ENCODE measurements at regions of chr12 and their contacts with region 1.

Region 1: GRCh38 chr12:51549637-51550036 is 41.4 kb upstream of the SCN8A start:
- DNase-seq: no peak
- ATAC-seq: no peak
- H3K4me3 ChIP-seq: no peak overlapping the region
- H3K4me3 Mint-ChIP-seq: no peak overlapping the region
- H3K27ac ChIP-seq: no peak overlapping the region
- H3K27ac Mint-ChIP-seq: no peak overlapping the region
- H3K4me1 ChIP-seq: no peaks in the 10 kb centered on the region
- H3K4me1 Mint-ChIP-seq: no peaks in the 10 kb centered on the region
- H3K27me3 ChIP-seq: peaks cover 0 to 7% of the 10 kb centered on the region in 2 experiments
- H3K27me3 Mint-ChIP-seq: peaks cover 23 to 37% of the 10 kb centered on the region in 2 donors

Region 2: DNA sequence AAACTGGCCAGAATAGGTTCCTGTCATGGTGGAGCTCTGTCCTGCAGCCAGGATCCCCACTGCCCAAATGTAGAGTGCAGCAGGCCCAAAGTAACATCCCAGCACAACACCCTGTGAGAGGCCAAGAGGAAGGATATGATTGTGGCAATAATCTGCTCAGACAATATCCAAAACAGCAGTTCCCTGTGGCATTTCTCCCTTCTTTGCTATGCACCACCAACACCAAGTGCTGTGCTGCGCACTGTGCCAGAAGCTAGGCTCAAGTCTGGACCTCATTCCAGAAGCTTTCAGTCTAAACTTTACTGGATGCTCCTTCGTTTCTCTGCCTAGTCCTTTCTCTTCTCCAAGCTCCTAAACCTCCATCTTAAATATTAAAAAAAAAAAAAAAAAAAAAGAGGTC is 556.8 kb before region 1 on chr12:
- CTCF ChIA-PET with region 1: no interaction called
- POLR2A ChIA-PET with region 1: interaction called in 1 of 2 experiments, 11 read pairs
- DNase-seq: no peak
- ATAC-seq: no peak
- H3K4me3 ChIP-seq: no peak overlapping the region
- H3K4me3 Mint-ChIP-seq: no peak overlapping the region
- H3K27ac ChIP-seq: no peak overlapping the region
- H3K27ac Mint-ChIP-seq: no peak overlapping the region
- H3K4me1 ChIP-seq: no peaks in the 10 kb centered on the region
- H3K4me1 Mint-ChIP-seq: no peaks in the 10 kb centered on the region
- H3K27me3 ChIP-seq: no peaks in the 10 kb centered on the region
- H3K27me3 Mint-ChIP-seq: no peaks in the 10 kb centered on the region

Region 3: DNA sequence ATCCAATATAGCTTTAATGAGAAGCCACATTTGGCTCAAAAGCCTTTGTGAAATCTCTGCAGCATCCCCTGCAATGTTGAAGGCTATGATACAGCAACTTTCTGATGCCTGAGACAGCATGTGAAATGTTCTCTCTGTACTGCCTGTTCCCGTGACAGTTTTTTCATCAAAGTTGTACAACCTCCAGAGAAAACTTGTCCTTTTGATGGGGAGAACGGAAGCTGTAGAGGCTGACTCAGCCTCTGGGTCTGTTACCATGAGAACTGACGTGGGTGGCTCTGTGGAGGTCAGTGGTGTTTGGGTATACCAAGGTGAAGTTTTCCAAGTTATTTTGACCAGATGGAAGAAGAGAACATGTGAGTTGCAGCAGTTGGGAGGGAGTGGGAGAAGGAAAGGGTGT is 108.1 kb before region 1 on chr12:
- CTCF ChIA-PET with region 1: no interaction called
- POLR2A ChIA-PET with region 1: no interaction called
- DNase-seq: peak in 1 of 35 experiments; percentile 3
- ATAC-seq: peak in 1 of 4 experiments; percentile 38
- H3K4me3 ChIP-seq: no peak overlapping the region
- H3K4me3 Mint-ChIP-seq: no peak overlapping the region
- H3K27ac ChIP-seq: no peak overlapping the region
- H3K27ac Mint-ChIP-seq: no peak overlapping the region
- H3K4me1 ChIP-seq: no peaks in the 10 kb centered on the region
- H3K4me1 Mint-ChIP-seq: peaks cover 17 to 46% (median 25%) of the 10 kb centered on the region in 3 donors
- H3K27me3 ChIP-seq: no peaks in the 10 kb centered on the region
- H3K27me3 Mint-ChIP-seq: no peaks in the 10 kb centered on the region

Region 4: DNA sequence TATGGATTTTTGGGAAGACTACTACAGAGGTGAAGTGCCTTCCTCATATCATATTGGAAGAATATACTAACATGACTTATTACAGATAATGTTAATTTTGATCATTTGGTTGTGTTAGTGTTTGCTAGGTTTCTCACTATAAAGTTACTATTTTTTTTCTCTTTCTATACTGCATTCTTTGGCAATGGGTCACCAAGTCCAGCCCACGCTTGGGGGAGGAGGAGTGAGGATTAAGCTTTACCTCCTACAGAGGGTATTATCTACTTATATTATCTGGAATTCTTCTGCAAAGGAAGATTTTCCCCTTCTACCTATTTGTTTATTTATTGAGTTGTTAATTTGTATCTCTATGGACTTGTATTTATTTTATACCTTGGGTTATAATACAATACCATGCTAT is 72.9 kb after region 1 on chr12:
- CTCF ChIA-PET with region 1: no interaction called
- POLR2A ChIA-PET with region 1: no interaction called
- DNase-seq: no peak
- ATAC-seq: no peak
- H3K4me3 ChIP-seq: no peak overlapping the region
- H3K4me3 Mint-ChIP-seq: no peak overlapping the region
- H3K27ac ChIP-seq: no peak overlapping the region
- H3K27ac Mint-ChIP-seq: no peak overlapping the region
- H3K4me1 ChIP-seq: no peaks in the 10 kb centered on the region
- H3K4me1 Mint-ChIP-seq: no peaks in the 10 kb centered on the region
- H3K27me3 ChIP-seq: peaks cover 0 to 2% of the 10 kb centered on the region in 2 experiments
- H3K27me3 Mint-ChIP-seq: peaks cover 12 to 19% of the 10 kb centered on the region in 2 donors